ENCODE measurements at regions of chr6 and their contacts with region 1.

Region 1: GRCh38 chr6:47309291-47310130 is at the start of gene TNFRSF21:
- DNase-seq: peak; percentile 83 to 89 (median 85)
- H3K4me3 ChIP-seq: peak within 1 kb of the TSS; percentile 58
- H3K27ac ChIP-seq: peak within 1 kb of the TSS; percentile 33 to 43
- H3K4me1 ChIP-seq: peaks cover 2% of the 10 kb centered on the region
- H3K27me3 ChIP-seq: no peaks in the 10 kb centered on the region
- CTCF ChIP-seq: peak; percentile 76 to 93 (median 77)
- EP300 ChIP-seq: no peak
- POLR2A ChIP-seq: no peak
- total RNA-seq, gene TNFRSF21: 4.9 to 15.1 (median 13.5) TPM

Region 2: DNA sequence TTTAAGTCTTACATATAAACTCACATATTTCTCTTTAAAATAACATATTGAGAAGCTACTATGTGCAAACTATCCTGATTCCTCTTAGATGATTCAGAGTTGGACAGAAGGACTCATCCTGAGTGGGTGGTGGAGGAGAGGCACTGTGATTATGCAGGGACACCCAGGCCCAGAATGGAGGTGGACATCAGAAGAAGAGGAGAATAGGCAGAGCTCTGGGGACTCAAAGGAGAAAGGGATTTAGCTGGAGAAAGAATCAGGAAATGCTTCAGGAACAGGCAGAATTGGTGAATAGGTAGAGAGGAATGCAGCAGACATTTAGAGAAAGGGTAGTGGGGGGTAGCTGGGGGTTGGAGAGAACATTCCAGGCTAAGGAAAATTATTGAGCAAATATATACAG is 835.6 kb before region 1 on chr6:
- intact Hi-C with region 1: loop called in 1 of 4 experiments (anchors 5 kb)
- DNase-seq: no peak
- H3K4me3 ChIP-seq: no peak overlapping the region
- H3K27ac ChIP-seq: no peak overlapping the region
- H3K4me1 ChIP-seq: no peaks in the 10 kb centered on the region
- H3K27me3 ChIP-seq: no peaks in the 10 kb centered on the region
- CTCF ChIP-seq: no peak
- EP300 ChIP-seq: no peak
- POLR2A ChIP-seq: no peak

Region 3: DNA sequence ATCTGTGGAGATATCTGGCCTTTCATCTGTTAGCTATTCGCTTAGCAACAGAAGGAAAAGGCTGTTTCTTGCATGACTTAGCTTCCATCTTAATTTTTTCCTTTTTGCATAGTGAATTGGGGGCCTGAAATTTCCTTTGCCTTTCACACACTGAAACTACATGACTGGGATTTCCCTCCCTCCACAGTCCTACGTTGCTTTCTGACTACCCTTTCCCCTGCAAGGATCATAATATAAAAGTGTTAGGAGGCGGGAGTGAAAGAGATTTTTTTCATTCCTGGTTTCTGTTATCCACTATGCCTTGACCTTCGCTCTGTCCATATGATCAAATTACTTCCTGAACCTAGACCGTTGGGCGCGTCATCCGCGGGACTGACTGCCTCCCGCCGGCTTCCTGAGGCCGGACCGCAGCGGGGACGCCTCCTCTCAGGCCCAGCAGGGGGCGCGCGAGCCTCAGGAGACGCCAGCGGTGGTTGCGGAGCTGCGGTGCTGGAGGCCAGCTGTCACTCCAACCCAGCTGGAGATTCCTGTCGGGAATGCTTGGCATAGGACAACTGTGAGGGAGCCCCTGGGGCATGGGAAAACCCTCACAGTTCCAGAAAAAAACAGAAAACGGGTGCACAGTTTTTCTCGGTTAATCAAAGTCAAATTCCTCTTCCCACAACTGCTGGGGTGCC is 460.7 kb before region 1 on chr6:
- intact Hi-C with region 1: loop called in 3 of 4 experiments (anchors 2 to 10 kb)
- DNase-seq: peak; percentile 68 to 87 (median 81)
- H3K4me3 ChIP-seq: no peak overlapping the region
- H3K27ac ChIP-seq: no peak overlapping the region
- H3K4me1 ChIP-seq: peaks cover 1% of the 10 kb centered on the region
- H3K27me3 ChIP-seq: no peaks in the 10 kb centered on the region
- CTCF ChIP-seq: peak; percentile 76 to 93 (median 86)
- EP300 ChIP-seq: no peak
- POLR2A ChIP-seq: no peak

Region 4: GRCh38 chr6:46862381-46862780 is 447.1 kb before region 1 on chr6:
- intact Hi-C with region 1: loop called in 2 of 4 experiments (anchors 10 kb)
- DNase-seq: no peak
- H3K4me3 ChIP-seq: no peak overlapping the region
- H3K27ac ChIP-seq: no peak overlapping the region
- H3K4me1 ChIP-seq: no peaks in the 10 kb centered on the region
- H3K27me3 ChIP-seq: no peaks in the 10 kb centered on the region
- CTCF ChIP-seq: no peak
- EP300 ChIP-seq: no peak
- POLR2A ChIP-seq: no peak

Region 5: DNA sequence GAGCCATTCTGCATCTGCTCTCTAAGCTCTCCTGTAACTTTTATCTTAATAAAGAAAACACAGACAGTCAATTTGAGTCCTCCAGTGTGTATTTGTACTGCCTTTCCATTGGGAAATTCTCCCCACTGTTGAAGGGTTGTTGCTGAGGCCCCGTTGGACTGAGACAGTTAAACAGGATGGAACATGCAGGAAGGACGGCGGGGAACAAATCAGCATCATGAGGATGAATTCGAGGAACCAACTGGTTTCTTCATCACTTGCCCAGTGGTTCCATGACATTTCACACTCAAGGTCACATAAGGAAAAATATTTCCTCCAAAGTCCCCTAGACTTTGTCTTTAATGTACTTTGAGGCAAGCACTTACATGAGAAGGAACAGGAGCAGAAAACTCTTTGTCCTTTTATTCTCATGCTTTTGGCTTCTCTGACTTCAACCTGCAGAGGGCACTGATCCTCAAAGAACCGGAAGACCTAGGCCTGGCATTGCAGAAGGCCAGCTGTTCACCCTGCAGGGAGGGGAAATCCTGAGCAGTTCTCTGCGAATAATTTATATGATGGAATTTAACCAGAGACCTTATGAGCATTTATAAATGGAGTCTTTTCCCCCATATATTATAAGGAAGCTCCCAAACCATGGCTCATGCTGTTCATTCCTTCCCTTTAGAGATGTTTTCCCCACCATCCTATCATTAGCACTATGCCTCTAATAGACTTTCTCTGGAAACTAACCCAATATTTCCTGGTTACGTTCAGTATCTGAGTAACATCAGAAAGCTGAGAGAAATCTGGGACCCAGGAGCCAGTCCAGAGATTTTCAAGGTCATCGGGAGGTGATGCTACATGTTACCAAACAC is 212.2 kb before region 1 on chr6:
- intact Hi-C with region 1: loop called in 3 of 4 experiments (anchors 2 to 10 kb)
- DNase-seq: peak; percentile 34 to 62 (median 51)
- H3K4me3 ChIP-seq: no peak overlapping the region
- H3K27ac ChIP-seq: no peak overlapping the region
- H3K4me1 ChIP-seq: peaks cover 6% of the 10 kb centered on the region
- H3K27me3 ChIP-seq: no peaks in the 10 kb centered on the region
- CTCF ChIP-seq: peak in 2 of 3 donors; percentile 14 to 32
- EP300 ChIP-seq: no peak
- POLR2A ChIP-seq: no peak

Region 6: DNA sequence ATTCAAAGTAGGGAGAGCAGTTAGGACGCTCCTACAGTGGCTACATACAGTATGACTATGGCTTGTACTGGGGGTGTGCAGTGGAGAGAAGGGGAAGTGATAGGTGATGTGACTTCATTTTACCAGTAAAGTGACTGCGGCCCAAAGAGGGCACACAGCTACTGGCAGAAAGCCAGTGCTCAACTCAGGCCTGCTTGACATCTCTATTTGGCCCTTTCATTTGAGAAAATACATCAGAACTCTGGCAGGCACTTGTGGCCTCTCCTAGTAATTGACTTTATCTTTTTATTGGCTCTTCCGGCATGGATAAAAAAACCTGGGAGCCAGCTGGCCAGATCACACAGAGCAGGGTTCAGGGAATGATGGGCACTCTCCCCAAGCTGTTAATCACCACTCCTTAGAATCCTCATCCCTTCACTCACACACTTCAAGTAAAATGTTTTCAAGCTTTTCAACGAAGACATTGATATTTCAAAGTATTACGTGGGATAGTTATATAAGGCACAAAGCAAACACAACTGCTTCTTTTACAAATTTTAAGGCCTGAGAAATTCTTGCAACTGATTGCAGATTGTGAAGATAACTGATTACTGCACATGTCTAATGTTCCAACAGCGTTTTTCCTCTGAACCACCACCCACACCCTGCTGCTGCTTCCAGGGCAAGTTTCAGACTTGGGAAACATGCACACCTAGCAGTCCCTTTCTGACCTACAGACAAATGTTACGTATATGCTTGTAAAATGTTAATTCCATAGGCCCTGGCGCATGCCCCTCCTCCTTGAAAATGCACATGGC is 73.3 kb before region 1 on chr6:
- intact Hi-C with region 1: loop called in 1 of 4 experiments (anchors 10 kb)
- DNase-seq: no peak
- H3K4me3 ChIP-seq: no peak overlapping the region
- H3K27ac ChIP-seq: no peak overlapping the region
- H3K4me1 ChIP-seq: no peaks in the 10 kb centered on the region
- H3K27me3 ChIP-seq: no peaks in the 10 kb centered on the region
- CTCF ChIP-seq: no peak
- EP300 ChIP-seq: no peak
- POLR2A ChIP-seq: no peak

Region 7: DNA sequence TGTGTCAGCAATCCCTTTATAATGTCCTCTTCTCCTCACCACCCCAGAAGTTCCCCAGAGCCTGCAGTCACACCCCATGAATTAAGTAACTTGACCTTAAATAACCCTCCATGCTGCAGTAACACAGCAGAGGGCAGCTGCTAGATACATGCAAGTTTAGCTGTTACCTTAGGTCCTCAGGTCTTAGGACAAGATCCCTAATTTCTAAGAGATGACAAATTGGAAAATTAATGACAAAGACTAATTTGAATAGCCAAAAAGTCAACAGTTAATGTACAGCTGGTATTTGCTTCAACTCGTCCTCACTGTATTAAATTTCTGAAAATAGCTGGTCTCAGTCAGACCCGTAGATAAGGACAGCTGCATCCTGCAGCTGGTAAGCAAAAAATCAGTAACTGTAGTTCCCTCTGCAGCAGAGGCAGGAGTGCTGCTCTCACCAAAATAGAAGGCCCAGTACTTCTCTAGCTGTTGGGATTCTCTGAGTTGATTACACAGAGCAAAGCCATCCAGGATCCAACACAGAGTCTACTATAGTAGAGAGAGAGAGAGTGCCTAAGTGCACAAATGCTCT is 62.2 kb before region 1 on chr6:
- intact Hi-C with region 1: loop called in 1 of 4 experiments (anchors 5 kb)
- DNase-seq: no peak
- H3K4me3 ChIP-seq: no peak overlapping the region
- H3K27ac ChIP-seq: no peak overlapping the region
- H3K4me1 ChIP-seq: peaks cover 4% of the 10 kb centered on the region
- H3K27me3 ChIP-seq: no peaks in the 10 kb centered on the region
- CTCF ChIP-seq: no peak
- EP300 ChIP-seq: no peak
- POLR2A ChIP-seq: no peak